Left lung (tissue), 14 donors: ENCODE measurements at regions of chr6 and their contacts with region 1.

Region 1: DNA sequence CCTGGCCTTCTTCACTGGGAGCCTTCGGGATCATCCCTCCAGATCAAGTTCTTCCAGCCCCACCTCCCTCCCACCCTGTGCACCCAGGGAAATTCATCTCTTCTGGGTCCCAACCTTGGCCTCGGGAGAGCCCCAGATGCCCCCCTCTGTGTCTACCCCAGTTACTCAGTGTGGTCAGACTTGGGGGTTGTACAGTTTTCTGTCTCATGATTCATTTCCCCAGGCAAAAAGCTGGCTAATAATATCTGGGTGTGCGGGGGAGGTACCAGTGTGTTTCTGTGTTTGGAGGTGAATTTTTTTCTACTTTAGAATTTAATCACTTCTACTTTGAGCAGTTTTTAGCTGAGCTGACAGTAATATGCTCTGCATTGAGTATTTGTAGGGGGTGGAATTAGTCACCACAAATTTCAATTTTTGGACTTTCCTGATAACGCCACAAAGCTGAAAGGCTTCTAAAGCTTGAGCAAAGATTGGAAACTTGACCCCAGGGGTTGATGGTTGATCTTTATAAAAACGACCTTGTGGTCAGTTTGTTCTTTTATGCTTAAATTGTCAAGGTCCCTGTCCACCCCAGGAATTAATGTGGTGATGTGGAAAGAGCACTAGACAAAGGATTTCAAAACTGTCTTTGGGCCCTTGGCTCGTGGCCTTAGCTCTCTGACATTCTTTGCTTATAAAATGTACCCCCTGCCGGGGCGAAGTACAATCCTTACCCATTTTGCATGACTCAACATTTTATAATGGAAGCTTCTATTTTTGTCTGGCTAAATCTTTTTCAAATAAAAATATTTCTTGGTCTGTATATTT is 284.7 kb upstream of the TAB2 start:
- DNase-seq: no peak
- ATAC-seq: peak; percentile 58
- H3K4me3 ChIP-seq: no peak overlapping the region
- H3K27ac ChIP-seq: no peak overlapping the region
- H3K4me1 ChIP-seq: peaks cover 5 to 6% of the 10 kb centered on the region in 2 donors
- H3K27me3 ChIP-seq: no peaks in the 10 kb centered on the region
- CTCF ChIP-seq: no peak

Region 2: DNA sequence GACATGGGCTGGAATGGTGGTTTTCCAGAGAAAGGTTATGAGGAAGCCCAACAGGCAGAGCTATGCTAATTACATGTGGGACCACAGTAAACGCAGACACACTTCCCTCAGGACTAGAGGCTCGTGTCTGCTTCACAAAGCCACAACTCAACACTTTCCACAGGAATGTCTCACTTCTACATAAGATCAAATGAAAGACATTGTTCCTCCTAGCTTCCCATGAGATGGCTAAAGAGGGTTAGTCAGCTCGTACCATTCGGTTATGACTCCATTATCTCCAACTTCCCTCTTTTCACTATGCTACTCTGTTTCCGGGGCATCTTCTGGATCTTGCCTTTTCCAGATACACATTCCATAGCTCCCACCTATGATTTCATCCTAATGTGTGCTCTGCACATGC is 481.1 kb after region 1 on chr6:
- intact Hi-C with region 1: loop called in 1 of 2 experiments (anchors 10 kb)
- DNase-seq: no peak
- ATAC-seq: peak; percentile 47
- H3K4me3 ChIP-seq: no peak overlapping the region
- H3K27ac ChIP-seq: no peak overlapping the region
- H3K4me1 ChIP-seq: no peaks in the 10 kb centered on the region
- H3K27me3 ChIP-seq: no peaks in the 10 kb centered on the region
- CTCF ChIP-seq: no peak